Activated T-helper 1 cell treated with anti-CD3 and anti-CD28 coated beads, Interleukin-12 subunit alpha, Interleukin-12 subunit beta, Interleukin-2, Interleukin-4 antibody, amounts not matched to agents 30 ng/mL and 10 ng/mL and 1 ng/mL, durations not matched to agents 14 hours and 24 hours and 36 hours (primary cell): ENCODE measurements at regions of chr11 and their contacts with region 1.

Region 1: GRCh38 chr11:11022125-11022730 is 164.4 kb upstream of the ZBED5 start:
- DNase-seq: no peak
- H3K4me3 Mint-ChIP-seq: no peak overlapping the region
- H3K27ac Mint-ChIP-seq: no peak overlapping the region
- H3K4me1 Mint-ChIP-seq: no peaks in the 10 kb centered on the region
- H3K27me3 Mint-ChIP-seq: peaks cover 10% of the 10 kb centered on the region

Region 2: DNA sequence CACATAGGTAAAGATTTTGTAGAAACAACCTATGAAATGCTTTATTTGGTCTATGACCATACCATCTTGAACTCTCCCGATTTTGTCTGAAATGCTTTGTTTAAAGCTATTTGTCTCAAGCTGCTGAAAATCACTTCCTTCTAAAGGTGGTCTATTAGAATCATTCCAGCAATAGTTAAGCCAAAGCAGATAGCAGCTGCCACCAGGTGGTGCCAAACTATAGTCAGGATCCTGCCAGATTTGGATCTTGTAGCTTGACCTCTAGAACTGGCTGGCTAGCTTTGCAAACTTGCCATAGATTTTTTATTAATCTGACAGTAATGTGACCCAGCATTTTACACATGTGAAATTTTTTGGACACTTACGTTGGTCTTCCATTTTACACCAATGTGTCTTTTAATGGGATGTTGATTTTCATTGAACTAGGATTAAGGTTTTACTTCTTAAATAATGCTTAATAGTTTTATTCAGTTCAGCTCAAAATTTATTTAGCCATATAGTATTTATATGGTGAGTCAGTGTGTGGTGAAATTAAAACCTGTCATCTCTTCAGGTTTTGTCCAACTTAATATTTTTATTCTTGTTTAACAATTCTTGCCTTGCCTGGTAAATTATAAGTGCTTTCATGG is 251.5 kb before region 1 on chr11:
- intact Hi-C with region 1: loop called (anchors 5 kb)
- DNase-seq: peak; percentile 6
- H3K4me3 Mint-ChIP-seq: no peak overlapping the region
- H3K27ac Mint-ChIP-seq: no peak overlapping the region
- H3K4me1 Mint-ChIP-seq: no peaks in the 10 kb centered on the region
- H3K27me3 Mint-ChIP-seq: no peaks in the 10 kb centered on the region

Region 3: DNA sequence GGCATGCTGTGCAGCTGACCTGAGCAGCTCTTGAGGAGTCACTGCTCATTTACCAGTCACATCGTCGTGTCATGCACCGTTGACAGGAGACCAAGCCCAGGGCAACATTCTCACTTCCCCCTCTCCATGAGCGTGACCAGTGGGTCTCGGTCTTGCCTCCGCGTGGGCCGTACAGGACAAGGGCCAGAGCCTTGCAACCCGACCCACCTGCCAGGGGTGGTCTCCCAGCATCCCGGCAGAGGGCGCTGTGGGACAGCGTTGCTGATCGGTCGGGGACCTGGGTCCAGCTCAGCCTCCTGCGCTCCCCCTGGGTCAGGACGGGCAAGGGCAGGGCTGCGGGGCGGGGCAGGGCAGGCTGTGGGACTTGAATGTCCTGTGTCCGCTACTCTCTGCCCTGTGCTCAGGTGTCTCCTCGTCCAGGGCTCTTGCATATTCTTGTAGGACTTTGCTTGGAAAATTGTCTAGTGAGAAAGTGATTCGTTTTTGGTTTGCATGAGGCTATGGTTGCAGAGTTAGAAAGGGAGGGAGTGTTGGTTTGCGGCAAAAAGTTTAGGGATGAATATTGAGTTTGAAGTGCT is 229.7 kb before region 1 on chr11:
- intact Hi-C with region 1: loop called (anchors 1 kb)
- DNase-seq: peak; percentile 74
- H3K4me3 Mint-ChIP-seq: peak overlapping the region; percentile 1
- H3K27ac Mint-ChIP-seq: no peak overlapping the region
- H3K4me1 Mint-ChIP-seq: peaks cover 21% of the 10 kb centered on the region
- H3K27me3 Mint-ChIP-seq: peaks cover 25% of the 10 kb centered on the region